Colonic mucosa (tissue), 4 donors: ENCODE measurements at regions of chr7 and their contacts with region 1.

Region 1: DNA sequence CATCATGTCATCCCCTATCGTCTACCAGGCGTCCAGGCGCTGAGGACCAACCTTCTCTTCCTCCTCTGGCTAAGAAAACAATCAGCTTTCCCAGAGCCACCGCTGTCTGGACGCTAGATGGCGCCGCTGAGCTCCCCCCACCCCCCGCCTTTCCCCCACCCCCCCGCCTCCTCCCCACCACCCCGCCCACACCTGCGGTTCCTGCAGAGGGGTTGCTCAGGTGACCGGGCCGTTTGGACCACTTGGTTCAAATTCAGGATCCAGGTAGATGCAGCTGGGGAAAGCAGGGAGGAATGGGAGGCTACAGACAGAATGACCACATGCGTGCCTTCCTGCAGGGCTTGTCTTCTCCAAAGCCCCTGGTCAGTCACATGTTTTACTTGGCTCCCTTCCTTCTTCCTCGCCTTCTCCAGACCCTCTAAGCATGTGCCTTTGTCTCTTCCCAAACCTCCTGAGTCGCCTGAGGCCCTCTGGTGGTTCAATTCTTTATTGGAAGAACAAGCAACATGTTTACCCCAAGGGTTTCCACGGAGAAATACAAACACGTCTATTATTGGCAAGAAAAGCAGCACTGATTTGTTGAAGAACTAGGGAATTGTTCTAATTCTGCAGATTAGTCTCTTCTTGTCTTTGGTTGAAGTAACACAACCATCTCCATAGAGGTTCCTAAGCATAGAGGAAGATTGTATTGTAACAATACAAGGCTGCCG is 24.7 kb downstream of the AOC1 start:
- DNase-seq: peak; percentile 77
- H3K4me3 ChIP-seq: no peak overlapping the region
- H3K27ac ChIP-seq: no peak overlapping the region
- H3K4me1 ChIP-seq: no peaks in the 10 kb centered on the region
- H3K27me3 ChIP-seq: no peaks in the 10 kb centered on the region
- CTCF ChIP-seq: peak; percentile 38

Region 2: GRCh38 chr7:150781103-150781502 is 95.9 kb before region 1 on chr7:
- intact Hi-C with region 1: loop called (anchors 5 kb)
- DNase-seq: no peak
- H3K4me3 ChIP-seq: no peak overlapping the region
- H3K27ac ChIP-seq: peak overlapping the region; percentile 56
- H3K4me1 ChIP-seq: peaks cover 4% of the 10 kb centered on the region
- H3K27me3 ChIP-seq: no peaks in the 10 kb centered on the region
- CTCF ChIP-seq: no peak